ENCODE measurements at regions of chr20 and their contacts with region 1.

Region 1: GRCh38 chr20:19889011-19889953 is 127.9 kb upstream of the NAA20 start:
- DNase-seq: no peak
- ATAC-seq: peak; percentile 43
- H3K4me3 ChIP-seq: peak overlapping the region; percentile 45 to 71
- H3K27ac ChIP-seq: peak overlapping the region; percentile 98
- H3K4me1 ChIP-seq: peaks cover 26% of the 10 kb centered on the region
- H3K27me3 ChIP-seq: no peaks in the 10 kb centered on the region
- CTCF ChIP-seq: no peak

Region 2: DNA sequence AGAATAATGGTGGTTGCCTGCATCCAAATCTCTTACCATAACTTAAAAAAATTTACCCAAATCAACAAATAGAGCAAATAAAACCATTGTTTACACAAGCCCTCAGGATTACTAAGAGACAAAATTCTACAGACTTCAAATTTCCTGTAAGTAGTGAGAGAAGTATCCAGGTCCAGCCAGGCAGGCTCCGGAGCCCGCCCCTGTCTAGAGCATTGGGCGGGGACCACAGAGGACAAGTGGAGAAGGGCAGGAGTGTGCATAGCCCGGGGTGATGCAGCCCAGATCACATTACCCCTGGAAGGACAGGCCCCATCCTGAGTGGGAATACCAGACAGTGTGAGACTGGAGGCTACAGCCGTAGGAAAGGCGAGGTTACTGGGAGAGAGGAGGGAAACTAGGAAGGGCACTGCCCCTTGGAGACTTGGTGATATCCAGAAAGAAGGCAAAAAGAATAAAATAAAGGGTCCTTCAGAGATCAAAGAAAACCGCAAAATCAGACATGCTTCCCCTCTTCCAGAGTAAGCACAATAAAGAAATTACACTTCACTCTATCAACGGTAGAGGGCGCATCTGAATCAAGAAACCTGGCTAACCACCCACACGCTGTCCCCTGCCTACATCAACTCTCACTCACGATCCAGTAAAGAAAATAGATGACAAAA is 104.6 kb before region 1 on chr20:
- CTCF ChIA-PET with region 1: interaction called, 5 read pairs
- POLR2A ChIA-PET with region 1: no interaction called
- in situ Hi-C with region 1: no loop called
- intact Hi-C with region 1: loop called (anchors 2 kb)
- DNase-seq: peak; percentile 74
- ATAC-seq: peak; percentile 88
- H3K4me3 ChIP-seq: peak overlapping the region in 1 of 2 experiments; percentile 40; a peak in 2 of 4 replicates
- H3K27ac ChIP-seq: peak overlapping the region; percentile 65
- H3K4me1 ChIP-seq: peaks cover 42% of the 10 kb centered on the region
- H3K27me3 ChIP-seq: no peaks in the 10 kb centered on the region
- CTCF ChIP-seq: peak; percentile 85

Region 3: DNA sequence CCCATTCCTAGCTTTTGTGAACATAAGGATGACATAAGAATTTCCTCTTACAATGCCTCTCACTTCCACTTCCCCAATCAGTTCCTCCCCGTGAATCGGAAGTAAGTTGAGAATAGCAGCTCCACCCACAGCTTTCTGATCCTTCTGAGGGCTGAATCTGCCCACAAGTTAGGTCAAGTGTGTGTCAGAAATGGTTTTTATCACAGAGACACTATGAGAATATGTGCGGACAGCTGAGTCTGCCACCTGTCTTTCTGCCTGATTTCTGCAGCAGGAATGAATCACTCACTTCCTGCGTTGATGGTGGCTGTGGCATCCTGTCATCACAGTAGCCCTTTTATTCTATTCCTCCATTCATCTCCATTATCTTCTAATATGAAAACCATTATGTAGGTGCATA is 61.0 kb before region 1 on chr20:
- CTCF ChIA-PET with region 1: interaction called, 12 read pairs
- POLR2A ChIA-PET with region 1: no interaction called
- in situ Hi-C with region 1: no loop called
- intact Hi-C with region 1: no loop called
- DNase-seq: peak; percentile 60
- ATAC-seq: peak; percentile 79; the same call in 1 of the 2 replicates
- H3K4me3 ChIP-seq: no peak overlapping the region
- H3K27ac ChIP-seq: peak overlapping the region; percentile 57; the same call in 1 of the 2 replicates
- H3K4me1 ChIP-seq: peaks cover 13% of the 10 kb centered on the region
- H3K27me3 ChIP-seq: no peaks in the 10 kb centered on the region
- CTCF ChIP-seq: peak; percentile 60

Region 4: DNA sequence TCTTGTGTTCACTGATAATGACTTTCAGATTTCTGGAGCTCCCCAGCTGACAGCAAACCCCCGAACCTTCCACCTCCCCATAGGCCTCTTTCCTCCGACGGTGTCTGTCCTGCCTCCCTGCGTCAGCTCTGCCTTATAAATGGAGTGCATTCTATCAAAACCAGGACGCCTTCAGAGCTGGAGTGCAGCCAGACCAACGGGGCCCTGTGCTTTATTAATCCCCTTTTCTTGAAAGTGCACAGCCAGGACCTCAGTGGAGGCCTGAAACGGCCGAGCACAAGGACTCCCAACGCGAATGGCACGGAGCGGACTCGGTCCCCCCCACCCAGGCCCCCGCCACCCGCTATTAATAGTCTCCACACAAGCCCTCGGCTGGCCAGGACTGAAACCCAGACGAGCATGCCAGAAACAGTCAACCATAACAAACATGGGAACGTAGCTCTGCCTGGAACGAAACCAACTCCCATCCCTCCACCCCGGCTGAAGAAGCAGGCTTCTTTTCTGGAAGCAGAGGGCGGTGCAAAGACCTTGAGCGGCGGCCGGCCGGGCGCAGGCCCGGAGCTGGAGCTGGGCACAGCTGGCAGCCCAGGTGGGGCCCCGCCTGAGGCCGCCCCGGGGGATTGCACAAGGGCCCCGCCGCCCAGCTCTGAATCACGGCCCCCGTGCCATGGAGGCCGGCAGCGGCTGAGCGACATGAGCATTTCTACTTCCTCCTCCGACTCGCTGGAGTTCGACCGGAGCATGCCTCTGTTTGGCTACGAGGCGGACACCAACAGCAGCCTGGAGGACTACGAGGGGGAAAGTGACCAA is 85.5 kb after region 1 on chr20:
- CTCF ChIA-PET with region 1: interaction called, 4 read pairs
- POLR2A ChIA-PET with region 1: interaction called, 19 read pairs
- in situ Hi-C with region 1: no loop called
- intact Hi-C with region 1: loop called (anchors 5 kb)
- DNase-seq: no peak
- ATAC-seq: peak; percentile 71
- H3K4me3 ChIP-seq: peak overlapping the region; percentile 52 to 68
- H3K27ac ChIP-seq: peak overlapping the region; percentile 89
- H3K4me1 ChIP-seq: peaks cover 38% of the 10 kb centered on the region
- H3K27me3 ChIP-seq: no peaks in the 10 kb centered on the region
- CTCF ChIP-seq: no peak

Region 5: GRCh38 chr20:20034486-20034885 is 145.2 kb after region 1 on chr20:
- CTCF ChIA-PET with region 1: no interaction called
- POLR2A ChIA-PET with region 1: no interaction called
- in situ Hi-C with region 1: no loop called
- intact Hi-C with region 1: no loop called
- DNase-seq: no peak
- ATAC-seq: no peak
- H3K4me3 ChIP-seq: no peak overlapping the region
- H3K27ac ChIP-seq: no peak overlapping the region
- H3K4me1 ChIP-seq: no peaks in the 10 kb centered on the region
- H3K27me3 ChIP-seq: no peaks in the 10 kb centered on the region
- CTCF ChIP-seq: no peak

Measured in Panc1 (cell line).